ENCODE measurements at regions of chr18 and their contacts with region 1.

Region 1: GRCh38 chr18:3585656-3586509 is 135.9 kb downstream of the TGIF1 start:
- DNase-seq: peak; percentile 82
- ATAC-seq: peak; percentile 92
- H3K4me3 Mint-ChIP-seq: no peak overlapping the region
- H3K27ac Mint-ChIP-seq: no peak overlapping the region
- H3K4me1 Mint-ChIP-seq: peaks cover 25% of the 10 kb centered on the region
- H3K27me3 Mint-ChIP-seq: no peaks in the 10 kb centered on the region

Region 2: DNA sequence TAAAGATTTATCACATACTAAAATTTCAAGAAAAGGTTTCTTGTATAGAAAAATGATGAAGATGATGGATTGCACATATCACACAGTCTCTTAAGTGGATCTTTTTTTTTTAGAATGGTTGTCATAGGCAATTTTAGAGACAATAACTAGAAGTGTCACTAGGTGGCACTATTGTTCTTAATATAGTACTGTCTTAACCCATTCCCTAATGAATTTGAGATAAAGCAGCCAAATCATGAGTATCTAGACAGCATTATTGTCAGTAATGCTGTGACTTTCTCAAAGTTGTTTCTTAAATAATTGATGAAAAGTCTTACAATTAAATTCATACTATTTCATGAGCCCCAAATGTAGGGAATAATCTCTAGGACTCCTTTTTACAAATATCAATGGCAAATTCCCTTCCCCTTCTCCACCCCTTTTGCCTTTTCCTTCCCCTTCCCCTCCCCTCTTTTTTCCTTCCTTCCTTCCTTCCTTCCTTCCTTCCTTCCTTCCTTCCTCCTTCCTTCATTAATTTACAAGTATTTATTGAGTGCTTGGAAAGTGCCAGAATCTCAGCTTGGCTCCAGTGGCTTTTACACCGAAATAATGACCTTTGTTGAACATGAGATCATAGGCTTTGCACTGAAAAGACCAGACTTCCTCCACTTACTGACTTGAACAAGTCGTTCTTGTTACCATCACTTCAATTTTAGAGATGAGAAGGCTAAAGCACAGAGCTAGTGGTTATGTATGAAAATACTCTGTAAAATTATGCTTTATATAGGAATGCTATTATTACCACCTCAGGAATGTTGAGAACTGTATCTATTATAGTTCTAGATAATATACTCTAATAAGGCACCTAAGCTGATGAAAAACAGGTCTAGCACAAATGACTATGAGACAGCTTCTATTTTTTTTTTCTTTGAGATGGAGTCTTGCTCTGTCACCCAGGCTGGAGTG is 304.2 kb before region 1 on chr18:
- CTCF ChIA-PET with region 1: interaction called, 12 read pairs
- DNase-seq: no peak
- ATAC-seq: peak; percentile 87
- H3K4me3 Mint-ChIP-seq: no peak overlapping the region
- H3K27ac Mint-ChIP-seq: no peak overlapping the region
- H3K4me1 Mint-ChIP-seq: no peaks in the 10 kb centered on the region
- H3K27me3 Mint-ChIP-seq: peaks cover 2% of the 10 kb centered on the region

Region 3: GRCh38 chr18:3447895-3448837 is 137.7 kb before region 1 on chr18:
- CTCF ChIA-PET with region 1: interaction called, 19 read pairs
- DNase-seq: peak; percentile 91
- ATAC-seq: peak; percentile 68
- H3K4me3 Mint-ChIP-seq: peak overlapping the region; percentile 87
- H3K27ac Mint-ChIP-seq: peak overlapping the region; percentile 97
- H3K4me1 Mint-ChIP-seq: peaks cover 31% of the 10 kb centered on the region
- H3K27me3 Mint-ChIP-seq: no peaks in the 10 kb centered on the region

Region 4: GRCh38 chr18:3454365-3455089 is 131.4 kb before region 1 on chr18:
- CTCF ChIA-PET with region 1: interaction called, 25 read pairs
- DNase-seq: peak; percentile 63
- ATAC-seq: no peak
- H3K4me3 Mint-ChIP-seq: peak overlapping the region; percentile 87
- H3K27ac Mint-ChIP-seq: peak overlapping the region; percentile 83
- H3K4me1 Mint-ChIP-seq: peaks cover 55% of the 10 kb centered on the region
- H3K27me3 Mint-ChIP-seq: no peaks in the 10 kb centered on the region

Region 5: DNA sequence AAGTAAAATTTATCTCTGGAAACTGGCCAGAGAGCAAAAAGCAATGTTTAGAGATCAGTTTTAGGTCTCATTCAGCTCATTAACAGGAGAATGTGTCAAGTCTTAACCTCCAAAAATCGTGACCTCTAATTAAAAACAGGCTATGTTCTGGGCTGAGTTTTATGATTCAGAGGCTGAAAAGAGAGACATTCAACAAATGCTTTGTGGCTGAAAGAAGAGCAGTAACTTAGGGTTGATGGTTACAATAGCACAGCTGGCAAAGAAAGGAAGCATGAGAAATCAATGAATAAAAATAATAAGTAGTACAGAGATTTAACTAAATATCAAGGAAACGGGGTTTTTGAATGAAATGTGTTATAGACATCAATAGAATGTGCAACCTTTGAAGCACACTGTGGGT is 122.8 kb before region 1 on chr18:
- CTCF ChIA-PET with region 1: interaction called, 25 read pairs
- DNase-seq: no peak
- ATAC-seq: no peak
- H3K4me3 Mint-ChIP-seq: no peak overlapping the region
- H3K27ac Mint-ChIP-seq: no peak overlapping the region
- H3K4me1 Mint-ChIP-seq: peaks cover 18% of the 10 kb centered on the region
- H3K27me3 Mint-ChIP-seq: no peaks in the 10 kb centered on the region

Region 6: GRCh38 chr18:3722320-3723000 is 136.6 kb after region 1 on chr18:
- CTCF ChIA-PET with region 1: no interaction called
- DNase-seq: no peak
- ATAC-seq: no peak
- H3K4me3 Mint-ChIP-seq: no peak overlapping the region
- H3K27ac Mint-ChIP-seq: no peak overlapping the region
- H3K4me1 Mint-ChIP-seq: no peaks in the 10 kb centered on the region
- H3K27me3 Mint-ChIP-seq: peaks cover 22% of the 10 kb centered on the region